Transverse colon (tissue), 4 donors: ENCODE measurements at regions of chr3 and their contacts with region 1.

Region 1: GRCh38 chr3:131568460-131568859 is 65.7 kb upstream of the MRPL3 start:
- DNase-seq: no peak
- H3K4me3 ChIP-seq: no peak overlapping the region
- H3K27ac ChIP-seq: no peak overlapping the region
- H3K4me1 ChIP-seq: no peaks in the 10 kb centered on the region
- H3K27me3 ChIP-seq: no peaks in the 10 kb centered on the region
- CTCF ChIP-seq: no peak
- EP300 ChIP-seq: no peak
- POLR2A ChIP-seq: no peak

Region 2: DNA sequence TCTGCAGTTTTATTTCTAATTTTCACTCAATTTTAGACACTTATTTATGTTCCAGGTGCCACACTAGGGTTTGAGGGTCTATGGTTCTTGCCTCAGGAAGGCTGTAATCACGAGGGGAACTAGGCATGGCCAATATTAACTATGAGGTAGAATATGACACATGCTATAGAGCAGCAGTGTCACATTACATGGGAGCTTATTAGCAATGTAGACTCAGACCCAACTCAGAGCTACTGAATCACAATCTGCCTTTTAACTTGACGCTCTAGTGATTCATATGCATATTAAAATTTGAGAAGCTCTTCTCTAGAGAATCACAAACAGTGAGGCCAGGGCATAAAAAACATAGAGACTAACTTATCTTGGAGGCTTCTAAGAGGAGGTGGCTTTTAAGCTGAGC is 32.9 kb before region 1 on chr3:
- in situ Hi-C with region 1: no loop called
- intact Hi-C with region 1: loop called (anchors 1 kb)
- DNase-seq: no peak
- H3K4me3 ChIP-seq: no peak overlapping the region
- H3K27ac ChIP-seq: no peak overlapping the region
- H3K4me1 ChIP-seq: no peaks in the 10 kb centered on the region
- H3K27me3 ChIP-seq: no peaks in the 10 kb centered on the region
- CTCF ChIP-seq: no peak
- EP300 ChIP-seq: no peak
- POLR2A ChIP-seq: no peak